ENCODE measurements at regions of chr15 and their contacts with region 1.

Region 1: DNA sequence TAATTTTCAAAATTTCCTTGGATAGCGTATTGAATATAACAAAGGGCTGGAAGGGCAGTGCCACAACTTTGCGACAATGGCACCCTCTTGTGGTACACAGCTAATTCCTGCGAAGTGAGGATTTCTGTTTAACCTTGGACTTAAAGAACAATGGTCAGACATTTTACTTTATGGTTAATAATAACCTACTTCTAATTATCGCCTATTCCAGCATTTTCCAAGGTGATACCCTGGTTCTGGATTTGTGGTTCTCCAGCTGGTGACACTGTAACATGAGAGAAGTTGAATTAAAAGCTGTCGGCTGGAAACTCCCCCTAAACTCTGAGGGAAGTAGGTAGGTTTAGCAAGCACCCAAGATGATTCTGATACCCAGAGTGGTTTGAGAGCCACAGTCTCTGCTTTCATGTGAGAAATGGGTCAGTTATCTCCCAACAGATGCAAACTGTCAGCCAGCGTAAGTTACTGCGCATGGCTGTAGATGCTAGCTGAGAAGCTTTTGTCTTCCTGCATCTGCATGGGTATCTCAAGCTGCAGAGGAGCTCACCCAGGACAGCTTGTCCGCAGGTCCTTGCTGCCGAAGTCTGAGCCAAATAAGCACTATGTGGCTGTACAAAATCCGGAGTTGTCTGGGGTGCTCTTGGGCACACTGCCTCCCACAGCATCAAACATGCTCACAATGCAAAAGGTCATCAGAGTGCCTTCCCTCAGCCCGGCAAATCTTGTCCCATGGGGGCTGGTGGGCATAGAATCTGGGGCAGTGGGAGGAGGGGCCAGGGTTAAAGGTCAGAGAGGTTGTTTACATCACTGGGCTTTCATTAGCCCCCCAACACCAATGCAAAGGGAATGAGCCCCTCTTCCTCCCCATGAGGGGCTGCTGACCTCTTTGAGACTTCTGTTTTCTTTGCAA is 6.6 kb upstream of the CHSY1 start:
- DNase-seq: peak; percentile 51
- ATAC-seq: peak; percentile 88
- H3K4me3 ChIP-seq: no peak overlapping the region
- H3K27ac ChIP-seq: no peak overlapping the region
- H3K4me1 ChIP-seq: peaks cover 9% of the 10 kb centered on the region
- H3K27me3 ChIP-seq: no peaks in the 10 kb centered on the region
- CTCF ChIP-seq: peak; percentile 76 to 95 (median 92); a peak in 5 of 6 replicates
- EP300 ChIP-seq: peak in 1 of 2 experiments; percentile 70; a peak in 2 of 4 replicates
- POLR2A ChIP-seq: no peak
- RAD21 ChIP-seq: peak; percentile 97

Region 2: GRCh38 chr15:101014921-101015841 is 243.3 kb before region 1 on chr15:
- CTCF ChIA-PET with region 1: interaction called, 74 read pairs
- POLR2A ChIA-PET with region 1: interaction called, 3 read pairs
- RAD21 ChIA-PET with region 1: interaction called, 23 read pairs
- SMC1A ChIA-PET with region 1: interaction called, 38 read pairs
- in situ Hi-C with region 1: no loop called
- intact Hi-C with region 1: loop called (anchors 1 kb)
- DNase-seq: peak; percentile 5
- ATAC-seq: peak; percentile 89
- H3K4me3 ChIP-seq: no peak overlapping the region
- H3K27ac ChIP-seq: no peak overlapping the region
- H3K4me1 ChIP-seq: no peaks in the 10 kb centered on the region
- H3K27me3 ChIP-seq: no peaks in the 10 kb centered on the region
- CTCF ChIP-seq: peak; percentile 82 to 88 (median 87)
- EP300 ChIP-seq: no peak
- POLR2A ChIP-seq: no peak
- RAD21 ChIP-seq: peak; percentile 87

Region 3: DNA sequence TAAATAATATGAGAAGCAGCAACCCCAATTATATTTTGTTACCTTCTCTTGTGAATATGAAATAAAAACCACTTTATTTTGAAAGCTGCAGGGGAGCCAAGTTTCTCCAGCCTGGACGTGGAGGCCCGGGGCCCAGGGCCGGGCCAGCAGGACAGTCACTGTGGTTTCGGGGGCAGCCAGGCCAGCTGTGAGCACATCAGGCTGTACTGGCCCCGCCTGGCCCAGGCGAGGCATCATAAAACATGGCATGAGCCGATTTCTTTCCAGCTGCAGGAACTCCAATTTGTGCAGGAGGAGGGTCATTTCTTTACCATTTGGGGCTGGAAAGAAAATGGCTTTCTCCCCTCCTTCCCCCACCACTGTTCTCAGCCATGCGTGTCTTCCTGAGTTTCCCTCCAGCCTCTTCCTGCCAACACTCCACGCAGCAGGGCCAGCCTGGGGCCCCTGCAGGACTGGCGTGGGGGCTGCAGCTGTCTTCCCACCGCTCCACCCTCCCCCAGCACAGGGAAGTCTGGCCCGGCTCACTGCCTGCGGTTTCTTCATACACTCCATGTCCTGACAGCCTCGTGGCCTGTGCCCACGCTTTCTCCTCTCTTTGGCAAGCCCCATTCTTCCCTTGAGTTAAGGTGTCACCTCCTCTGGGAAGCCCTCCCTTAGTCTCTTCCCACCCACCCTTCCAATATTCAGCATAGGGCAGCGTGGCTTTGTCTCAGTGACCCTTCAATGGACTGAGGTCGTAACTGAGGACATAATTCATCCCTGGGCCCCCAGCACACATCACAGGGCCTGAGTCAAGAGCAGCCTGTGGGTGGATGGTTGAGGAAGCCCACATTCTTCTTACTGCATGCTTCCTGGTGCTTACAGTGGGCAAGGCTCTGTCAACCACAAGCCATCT is 142.5 kb before region 1 on chr15:
- CTCF ChIA-PET with region 1: interaction called, 60 read pairs
- POLR2A ChIA-PET with region 1: no interaction called
- RAD21 ChIA-PET with region 1: interaction called, 11 read pairs
- SMC1A ChIA-PET with region 1: interaction called, 12 read pairs
- in situ Hi-C with region 1: no loop called
- intact Hi-C with region 1: no loop called
- DNase-seq: no peak
- ATAC-seq: no peak
- H3K4me3 ChIP-seq: no peak overlapping the region
- H3K27ac ChIP-seq: no peak overlapping the region
- H3K4me1 ChIP-seq: peaks cover 3% of the 10 kb centered on the region; the same call in 1 of the 2 replicates
- H3K27me3 ChIP-seq: peaks cover 0 to 4% of the 10 kb centered on the region in 2 experiments; a peak in 1 of 4 replicates
- CTCF ChIP-seq: no peak
- EP300 ChIP-seq: no peak
- POLR2A ChIP-seq: no peak
- RAD21 ChIP-seq: no peak

Region 4: GRCh38 chr15:101188637-101189408 is 69.7 kb before region 1 on chr15:
- CTCF ChIA-PET with region 1: interaction called, 6 read pairs
- POLR2A ChIA-PET with region 1: interaction called, 4 read pairs
- RAD21 ChIA-PET with region 1: interaction called, 10 read pairs
- SMC1A ChIA-PET with region 1: interaction called, 4 read pairs
- in situ Hi-C with region 1: no loop called
- intact Hi-C with region 1: no loop called
- DNase-seq: peak; percentile 39
- ATAC-seq: peak; percentile 84
- H3K4me3 ChIP-seq: peak overlapping the region; percentile 65; the same call in 1 of the 2 replicates
- H3K27ac ChIP-seq: peak overlapping the region; percentile 67
- H3K4me1 ChIP-seq: peaks cover 17% of the 10 kb centered on the region
- H3K27me3 ChIP-seq: no peaks in the 10 kb centered on the region
- CTCF ChIP-seq: no peak
- EP300 ChIP-seq: peak in 1 of 2 experiments; percentile 76; a peak in 2 of 4 replicates
- POLR2A ChIP-seq: no peak
- RAD21 ChIP-seq: no peak

Region 5: DNA sequence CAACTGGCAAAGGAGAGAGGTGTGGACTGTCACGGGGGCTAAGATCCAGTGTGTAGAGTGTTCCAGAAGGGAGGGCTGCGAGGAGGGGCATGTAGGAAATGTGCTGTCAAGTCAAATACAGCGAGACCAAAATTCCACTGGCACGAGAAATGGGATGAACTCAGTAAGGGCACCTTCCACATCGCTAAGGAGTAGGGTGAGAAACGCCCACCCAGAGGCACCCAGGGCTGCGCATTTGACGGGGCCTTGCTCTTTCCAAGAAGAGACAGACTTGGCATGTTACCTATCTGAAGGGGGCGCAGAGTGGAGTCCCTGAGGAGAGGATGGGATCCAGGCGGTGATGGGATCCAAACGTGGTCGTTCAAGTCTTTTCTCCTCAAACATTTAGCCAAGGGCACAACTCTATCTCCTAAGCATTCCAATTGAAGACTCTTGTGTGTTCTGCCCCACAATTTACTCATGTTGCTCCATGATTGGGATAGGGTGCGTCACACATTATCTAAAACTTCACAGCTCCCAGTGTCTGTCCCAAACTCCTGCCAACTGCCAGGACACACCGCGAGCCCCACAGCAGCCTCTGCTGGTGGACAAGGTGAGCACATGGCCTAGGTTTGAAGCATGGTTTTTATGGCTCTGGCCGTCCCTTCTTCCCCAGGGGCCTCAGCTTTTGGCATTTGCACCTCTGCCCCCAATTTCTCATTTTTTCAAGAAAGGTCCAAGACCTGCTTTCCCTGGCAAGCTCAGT is 11.2 kb after region 1 on chr15:
- CTCF ChIA-PET with region 1: interaction called, 16 read pairs
- POLR2A ChIA-PET with region 1: interaction called, 7 read pairs
- RAD21 ChIA-PET with region 1: interaction called, 28 read pairs
- SMC1A ChIA-PET with region 1: interaction called, 41 read pairs
- in situ Hi-C with region 1: no loop called
- intact Hi-C with region 1: no loop called
- DNase-seq: no peak
- ATAC-seq: no peak
- H3K4me3 ChIP-seq: no peak overlapping the region
- H3K27ac ChIP-seq: no peak overlapping the region
- H3K4me1 ChIP-seq: peaks cover 15% of the 10 kb centered on the region
- H3K27me3 ChIP-seq: no peaks in the 10 kb centered on the region
- CTCF ChIP-seq: peak; percentile 30 to 60 (median 40); a peak in 5 of 6 replicates
- EP300 ChIP-seq: no peak
- POLR2A ChIP-seq: no peak; the same call in 1 of the 2 replicates
- RAD21 ChIP-seq: peak; percentile 16; the same call in 1 of the 2 replicates

Region 6: DNA sequence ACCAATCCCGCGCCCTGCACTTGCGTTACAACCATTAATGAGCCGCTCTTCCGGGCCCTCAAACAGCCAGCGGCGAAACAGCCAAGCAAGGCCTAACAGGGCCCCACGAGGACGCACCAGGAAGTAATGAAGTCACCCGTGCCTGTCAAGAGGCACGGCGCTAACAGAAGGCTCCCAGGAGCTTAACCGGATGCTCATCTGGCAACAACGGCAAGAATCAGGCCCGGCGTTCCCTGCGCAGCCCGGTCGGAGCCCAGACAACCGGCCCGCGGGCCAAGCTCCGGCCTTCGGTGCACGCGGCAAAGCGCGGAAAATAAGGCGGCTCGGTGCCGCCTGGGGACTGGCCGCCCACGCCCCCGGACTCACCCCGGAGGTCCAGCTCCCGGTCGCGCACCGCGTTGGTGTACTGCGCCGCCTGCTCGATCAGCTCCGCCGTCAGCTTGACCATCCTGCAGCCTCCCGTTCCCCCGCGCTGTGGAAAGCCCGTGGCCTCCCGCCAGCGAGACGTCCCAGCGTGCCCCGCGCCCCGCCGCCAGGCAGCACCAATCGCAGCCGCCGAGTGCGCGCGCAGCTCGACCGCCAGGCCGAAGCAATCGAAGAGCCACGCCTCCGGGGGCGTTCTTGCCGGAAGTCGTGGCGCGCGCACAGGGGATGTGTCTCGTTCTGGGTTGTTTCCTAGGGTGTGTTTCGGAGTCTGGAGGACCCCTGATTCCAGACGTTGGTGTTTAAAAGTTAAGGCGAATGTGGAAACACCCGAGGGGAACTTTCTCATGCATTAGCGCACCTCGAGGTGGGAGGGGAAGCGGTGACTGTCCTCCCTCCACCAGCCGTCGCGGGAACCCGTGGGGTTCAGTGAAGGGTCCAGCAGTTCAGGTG is 36.5 kb after region 1 on chr15 and contains the start of gene SNRPA1:
- CTCF ChIA-PET with region 1: interaction called, 18 read pairs
- POLR2A ChIA-PET with region 1: no interaction called
- RAD21 ChIA-PET with region 1: interaction called, 21 read pairs
- SMC1A ChIA-PET with region 1: interaction called, 8 read pairs
- in situ Hi-C with region 1: no loop called
- intact Hi-C with region 1: no loop called
- DNase-seq: peak; percentile 68
- ATAC-seq: peak; percentile 88
- H3K4me3 ChIP-seq: peak within 1 kb of the TSS; percentile 87
- H3K27ac ChIP-seq: peak within 1 kb of the TSS; percentile 95
- H3K4me1 ChIP-seq: peaks cover 8% of the 10 kb centered on the region
- H3K27me3 ChIP-seq: no peaks in the 10 kb centered on the region
- CTCF ChIP-seq: no peak
- EP300 ChIP-seq: 0 out of 4 replicates have a peak, but pooled peaks of 1 of the 2 experiments have one; percentile 7
- POLR2A ChIP-seq: peak; percentile 95
- RAD21 ChIP-seq: no peak
- polyA plus RNA-seq, gene SNRPA1: 174 to 238 TPM

Measured in GM12878 (cell line).